Activated B cell treated with CpG ODN at 0.5 μM for 24 hours (primary cell): ENCODE measurements at regions of chr10 and their contacts with region 1.

Region 1: GRCh38 chr10:43574001-43574892 is at the start of gene ZNF239:
- DNase-seq: peak; percentile 74
- ATAC-seq: peak; percentile 95
- H3K4me3 Mint-ChIP-seq: peak within 1 kb of the TSS; percentile 89
- H3K27ac Mint-ChIP-seq: peak within 1 kb of the TSS; percentile 83
- H3K4me1 Mint-ChIP-seq: peaks cover 48% of the 10 kb centered on the region
- H3K27me3 Mint-ChIP-seq: no peaks in the 10 kb centered on the region
- CTCF ChIP-seq: no peak
- total RNA-seq, gene ZNF239: 5.7 and 9.4 TPM in 2 replicates

Region 2: GRCh38 chr10:42367532-42368230 is 1206.6 kb before region 1 on chr10:
- CTCF ChIA-PET with region 1: no interaction called
- POLR2A ChIA-PET with region 1: no interaction called
- intact Hi-C with region 1: loop called (anchors 5 kb)
- DNase-seq: peak; percentile 41
- ATAC-seq: peak; percentile 99
- H3K4me3 Mint-ChIP-seq: peak overlapping the region; percentile 87
- H3K27ac Mint-ChIP-seq: peak overlapping the region; percentile 61
- H3K4me1 Mint-ChIP-seq: peaks cover 4% of the 10 kb centered on the region
- H3K27me3 Mint-ChIP-seq: no peaks in the 10 kb centered on the region
- CTCF ChIP-seq: no peak

Region 3: GRCh38 chr10:42552493-42553407 is 1021.5 kb before region 1 on chr10:
- CTCF ChIA-PET with region 1: no interaction called
- POLR2A ChIA-PET with region 1: no interaction called
- intact Hi-C with region 1: loop called (anchors 2 kb)
- DNase-seq: peak; percentile 85
- ATAC-seq: peak; percentile 97
- H3K4me3 Mint-ChIP-seq: peak overlapping the region; percentile 96
- H3K27ac Mint-ChIP-seq: peak overlapping the region; percentile 89
- H3K4me1 Mint-ChIP-seq: peaks cover 35% of the 10 kb centered on the region
- H3K27me3 Mint-ChIP-seq: no peaks in the 10 kb centered on the region
- CTCF ChIP-seq: no peak

Region 4: GRCh38 chr10:43361986-43362839 is 212.0 kb before region 1 on chr10:
- CTCF ChIA-PET with region 1: no interaction called
- POLR2A ChIA-PET with region 1: no interaction called
- intact Hi-C with region 1: loop called (anchors 1 kb)
- DNase-seq: peak; percentile 86
- ATAC-seq: peak; percentile 98
- H3K4me3 Mint-ChIP-seq: peak overlapping the region; percentile 97
- H3K27ac Mint-ChIP-seq: peak overlapping the region; percentile 93
- H3K4me1 Mint-ChIP-seq: peaks cover 23% of the 10 kb centered on the region
- H3K27me3 Mint-ChIP-seq: no peaks in the 10 kb centered on the region
- CTCF ChIP-seq: no peak

Region 5: GRCh38 chr10:43594944-43595589 is 20.8 kb after region 1 on chr10:
- CTCF ChIA-PET with region 1: no interaction called
- POLR2A ChIA-PET with region 1: interaction called, 19 read pairs
- intact Hi-C with region 1: loop called (anchors 1 kb)
- DNase-seq: no peak
- ATAC-seq: peak; percentile 90
- H3K4me3 Mint-ChIP-seq: peak overlapping the region; percentile 85
- H3K27ac Mint-ChIP-seq: peak overlapping the region; percentile 90
- H3K4me1 Mint-ChIP-seq: peaks cover 26% of the 10 kb centered on the region
- H3K27me3 Mint-ChIP-seq: no peaks in the 10 kb centered on the region
- CTCF ChIP-seq: no peak

Region 6: GRCh38 chr10:43606322-43607198 is 32.3 kb after region 1 on chr10 and contains the start of gene ZNF485:
- CTCF ChIA-PET with region 1: no interaction called
- POLR2A ChIA-PET with region 1: interaction called, 6 read pairs
- intact Hi-C with region 1: loop called (anchors 1 kb)
- DNase-seq: peak; percentile 66
- ATAC-seq: peak; percentile 95
- H3K4me3 Mint-ChIP-seq: peak within 1 kb of the TSS; percentile 84
- H3K27ac Mint-ChIP-seq: peak within 1 kb of the TSS; percentile 43
- H3K4me1 Mint-ChIP-seq: peaks cover 20% of the 10 kb centered on the region
- H3K27me3 Mint-ChIP-seq: no peaks in the 10 kb centered on the region
- CTCF ChIP-seq: no peak
- total RNA-seq, gene ZNF485: 7.6 and 9.0 TPM in 2 replicates